Activated B cell treated with CpG ODN at 0.5 μM for 24 hours (primary cell): ENCODE measurements at regions of chr13 and their contacts with region 1.

Region 1: DNA sequence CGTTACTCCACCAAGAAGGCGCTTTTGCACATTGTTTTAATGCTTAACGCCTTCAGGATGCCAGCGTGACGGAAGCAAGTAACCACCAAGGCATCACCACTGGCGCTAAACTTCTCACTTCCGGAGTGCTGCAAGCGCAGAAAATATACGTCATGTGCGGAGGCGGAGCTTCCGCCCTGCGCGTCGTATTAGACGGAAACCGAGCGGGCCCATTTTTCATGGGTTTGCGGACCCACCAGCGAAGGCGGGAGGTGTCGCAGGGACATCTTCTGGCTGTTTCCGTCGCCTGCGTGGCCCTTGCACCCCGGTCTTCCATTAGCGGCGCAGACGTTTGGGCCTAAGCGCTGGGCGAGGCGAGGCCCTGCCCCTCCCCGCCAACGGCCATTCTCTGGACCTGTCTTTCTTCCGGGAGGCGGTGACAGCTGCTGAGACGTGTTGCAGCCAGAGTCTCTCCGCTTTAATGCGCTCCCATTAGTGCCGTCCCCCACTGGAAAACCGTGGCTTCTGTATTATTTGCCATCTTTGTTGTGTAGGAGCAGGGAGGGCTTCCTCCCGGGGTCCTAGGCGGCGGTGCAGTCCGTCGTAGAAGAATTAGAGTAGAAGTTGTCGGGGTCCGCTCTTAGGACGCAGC is at the start of gene ERCC5:
- DNase-seq: peak; percentile 96
- ATAC-seq: peak; percentile 72
- H3K4me3 Mint-ChIP-seq: peak within 1 kb of the TSS; percentile 97
- H3K27ac Mint-ChIP-seq: peak within 1 kb of the TSS; percentile 99
- H3K4me1 Mint-ChIP-seq: peaks cover 31% of the 10 kb centered on the region
- H3K27me3 Mint-ChIP-seq: peaks cover 2% of the 10 kb centered on the region
- CTCF ChIP-seq: no peak
- total RNA-seq, gene ERCC5: 62.8 and 74.3 TPM in 2 replicates

Region 2: DNA sequence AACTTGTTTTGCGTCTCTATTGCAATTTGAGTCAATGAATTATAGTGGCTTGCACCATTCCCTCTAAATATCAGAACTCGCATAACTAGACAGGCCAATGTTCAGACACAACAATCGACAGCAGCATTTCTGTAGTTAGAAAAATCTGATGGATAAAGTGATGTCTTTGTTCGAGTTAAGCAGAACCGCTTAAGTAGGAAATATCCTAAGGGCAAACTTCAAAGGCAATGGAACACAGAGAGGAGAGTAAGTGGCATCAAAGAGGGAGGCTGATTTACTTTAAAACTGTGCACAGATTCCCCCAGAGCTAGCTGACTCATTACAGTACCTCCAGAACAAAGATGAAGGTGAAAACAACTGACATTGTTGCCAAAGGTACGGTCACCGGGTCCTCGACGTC is 1763.3 kb before region 1 on chr13:
- CTCF ChIA-PET with region 1: no interaction called
- POLR2A ChIA-PET with region 1: no interaction called
- intact Hi-C with region 1: no loop called
- DNase-seq: no peak
- ATAC-seq: no peak
- H3K4me3 Mint-ChIP-seq: no peak overlapping the region
- H3K27ac Mint-ChIP-seq: no peak overlapping the region
- H3K4me1 Mint-ChIP-seq: no peaks in the 10 kb centered on the region
- H3K27me3 Mint-ChIP-seq: no peaks in the 10 kb centered on the region
- CTCF ChIP-seq: no peak

Region 3: GRCh38 chr13:102141625-102142472 is 703.9 kb before region 1 on chr13:
- CTCF ChIA-PET with region 1: no interaction called
- POLR2A ChIA-PET with region 1: no interaction called
- intact Hi-C with region 1: loop called (anchors 2 kb)
- DNase-seq: no peak
- ATAC-seq: no peak
- H3K4me3 Mint-ChIP-seq: no peak overlapping the region
- H3K27ac Mint-ChIP-seq: no peak overlapping the region
- H3K4me1 Mint-ChIP-seq: no peaks in the 10 kb centered on the region
- H3K27me3 Mint-ChIP-seq: no peaks in the 10 kb centered on the region
- CTCF ChIP-seq: no peak

Region 4: GRCh38 chr13:102495663-102496062 is 350.1 kb before region 1 on chr13:
- CTCF ChIA-PET with region 1: no interaction called
- POLR2A ChIA-PET with region 1: no interaction called
- intact Hi-C with region 1: no loop called
- DNase-seq: no peak
- ATAC-seq: no peak
- H3K4me3 Mint-ChIP-seq: no peak overlapping the region
- H3K27ac Mint-ChIP-seq: no peak overlapping the region
- H3K4me1 Mint-ChIP-seq: no peaks in the 10 kb centered on the region
- H3K27me3 Mint-ChIP-seq: peaks cover 2% of the 10 kb centered on the region
- CTCF ChIP-seq: no peak

Region 5: DNA sequence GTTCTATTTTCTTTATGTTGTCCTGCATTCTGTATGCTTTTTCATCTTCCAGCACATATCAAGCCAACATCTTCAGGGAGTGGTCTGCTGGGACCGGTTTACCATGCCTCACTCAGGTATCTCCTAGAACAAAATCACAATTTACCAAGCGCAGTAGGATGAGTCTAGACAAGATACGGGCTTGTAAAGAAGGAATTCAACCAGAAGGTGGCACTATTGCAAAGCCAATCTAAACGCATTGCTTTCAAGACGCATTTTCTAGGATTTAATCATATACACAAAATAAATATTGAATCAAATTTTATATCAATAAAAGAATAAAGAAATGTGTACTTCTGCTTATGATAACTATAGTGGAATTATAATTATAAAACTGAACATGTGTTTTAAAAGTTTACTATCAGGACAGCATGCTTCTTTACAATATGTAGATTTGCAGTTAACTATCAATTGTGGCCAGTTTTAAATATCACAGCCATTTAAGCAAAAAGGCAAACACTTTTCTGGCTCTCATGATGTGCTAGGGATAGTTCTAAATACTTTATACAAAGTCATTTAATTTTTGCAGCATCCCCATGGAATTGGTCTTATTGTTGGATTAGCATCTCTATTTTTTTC is 265.1 kb before region 1 on chr13:
- CTCF ChIA-PET with region 1: interaction called, 9 read pairs
- POLR2A ChIA-PET with region 1: interaction called, 11 read pairs
- intact Hi-C with region 1: loop called (anchors 1 kb)
- DNase-seq: no peak
- ATAC-seq: peak; percentile 66
- H3K4me3 Mint-ChIP-seq: no peak overlapping the region
- H3K27ac Mint-ChIP-seq: no peak overlapping the region
- H3K4me1 Mint-ChIP-seq: peaks cover 9% of the 10 kb centered on the region
- H3K27me3 Mint-ChIP-seq: peaks cover 7% of the 10 kb centered on the region
- CTCF ChIP-seq: peak; percentile 43

Region 6: DNA sequence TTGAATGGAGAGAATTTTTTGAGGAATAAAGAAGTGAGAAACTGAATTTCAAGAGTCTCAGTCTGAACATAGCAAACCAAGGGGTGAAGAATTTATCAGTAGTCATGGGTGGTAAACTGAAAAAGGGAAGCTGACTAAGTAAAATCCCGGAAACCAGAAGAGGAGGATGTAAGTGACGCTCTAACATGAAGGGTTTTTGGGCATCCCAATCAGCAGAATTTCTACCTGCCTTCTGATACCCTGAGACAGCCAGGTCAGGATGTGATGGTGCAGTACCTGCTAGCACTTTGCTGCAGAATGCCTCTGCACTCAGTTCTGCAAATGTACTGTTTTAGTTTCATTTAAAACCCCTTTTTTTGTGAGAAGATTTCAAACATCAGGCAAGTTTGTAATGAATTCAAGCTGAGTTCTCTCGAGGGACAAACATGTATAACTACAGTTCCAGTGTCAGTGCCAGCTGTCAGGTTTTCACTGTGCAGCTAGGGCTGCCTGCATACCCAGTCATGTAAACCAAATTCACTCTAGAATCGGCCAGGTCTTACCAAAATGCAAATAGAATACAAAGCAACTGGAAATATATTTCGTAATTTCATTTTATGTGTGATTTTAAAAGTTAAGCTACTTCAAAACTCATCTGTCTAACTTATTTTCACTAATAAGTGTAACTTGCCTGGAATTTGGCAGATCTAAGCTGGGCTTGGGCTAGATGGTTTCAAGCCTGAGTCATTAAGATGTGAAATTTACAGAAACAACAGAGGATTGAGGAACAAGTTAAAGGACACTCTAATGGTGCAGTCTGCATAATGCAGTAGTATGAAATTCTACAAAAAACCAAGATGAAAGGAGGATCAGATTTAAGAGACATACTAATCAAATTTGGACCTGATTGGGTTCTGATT is 164.7 kb before region 1 on chr13:
- CTCF ChIA-PET with region 1: no interaction called
- POLR2A ChIA-PET with region 1: interaction called, 3 read pairs
- intact Hi-C with region 1: loop called (anchors 5 kb)
- DNase-seq: no peak
- ATAC-seq: peak; percentile 69
- H3K4me3 Mint-ChIP-seq: no peak overlapping the region
- H3K27ac Mint-ChIP-seq: peak overlapping the region; percentile 62
- H3K4me1 Mint-ChIP-seq: peaks cover 21% of the 10 kb centered on the region
- H3K27me3 Mint-ChIP-seq: no peaks in the 10 kb centered on the region
- CTCF ChIP-seq: no peak

Region 7: DNA sequence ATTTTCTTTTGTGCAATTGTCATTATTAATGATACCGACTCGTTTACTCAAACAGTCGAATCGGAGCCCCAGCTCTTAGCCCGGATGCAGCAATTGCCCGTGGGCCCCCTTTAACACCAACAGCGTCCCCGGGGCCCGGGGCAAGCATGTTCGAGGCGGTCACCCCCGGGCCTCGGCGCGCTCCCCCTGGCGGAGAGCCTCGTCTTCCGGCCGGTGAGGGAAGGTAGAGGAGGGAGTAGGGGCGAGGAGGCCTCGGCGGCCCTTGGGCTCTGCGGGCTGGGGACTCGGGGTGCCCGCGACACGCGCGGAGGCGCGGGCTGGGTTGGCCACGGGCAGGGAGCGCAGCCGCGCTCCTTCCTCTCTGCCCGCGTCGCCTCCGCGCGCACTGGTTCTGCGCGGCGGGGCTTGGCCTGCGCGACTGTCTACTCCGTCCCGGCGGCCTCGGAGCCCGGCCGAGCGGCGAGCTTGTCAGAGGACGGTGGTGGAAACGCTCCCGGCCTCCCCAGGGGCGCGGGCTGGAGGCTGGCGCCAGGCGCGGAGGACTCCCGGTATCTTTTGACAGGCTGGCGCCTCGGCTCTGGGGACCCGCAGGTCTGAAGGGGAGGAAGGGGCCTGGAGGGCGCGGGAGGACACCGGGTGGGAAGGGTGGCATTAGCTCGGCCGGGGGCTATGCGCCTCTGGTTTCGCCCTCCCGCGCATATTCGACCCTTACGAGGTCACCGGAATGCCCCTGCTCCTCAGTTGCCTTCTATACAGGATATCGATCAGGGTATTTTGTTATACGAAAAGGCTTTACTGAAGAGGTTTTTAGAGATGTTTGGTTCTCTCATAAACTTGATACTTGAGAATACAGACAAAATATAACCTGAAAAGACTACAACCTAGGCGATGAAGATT is 45.4 kb before region 1 on chr13:
- CTCF ChIA-PET with region 1: interaction called, 5 read pairs
- POLR2A ChIA-PET with region 1: interaction called, 13 read pairs
- intact Hi-C with region 1: loop called (anchors 1 kb)
- DNase-seq: peak; percentile 79
- ATAC-seq: peak; percentile 89
- H3K4me3 Mint-ChIP-seq: peak overlapping the region; percentile 85
- H3K27ac Mint-ChIP-seq: no peak overlapping the region
- H3K4me1 Mint-ChIP-seq: peaks cover 18% of the 10 kb centered on the region
- H3K27me3 Mint-ChIP-seq: peaks cover 7% of the 10 kb centered on the region
- CTCF ChIP-seq: no peak

Region 8: DNA sequence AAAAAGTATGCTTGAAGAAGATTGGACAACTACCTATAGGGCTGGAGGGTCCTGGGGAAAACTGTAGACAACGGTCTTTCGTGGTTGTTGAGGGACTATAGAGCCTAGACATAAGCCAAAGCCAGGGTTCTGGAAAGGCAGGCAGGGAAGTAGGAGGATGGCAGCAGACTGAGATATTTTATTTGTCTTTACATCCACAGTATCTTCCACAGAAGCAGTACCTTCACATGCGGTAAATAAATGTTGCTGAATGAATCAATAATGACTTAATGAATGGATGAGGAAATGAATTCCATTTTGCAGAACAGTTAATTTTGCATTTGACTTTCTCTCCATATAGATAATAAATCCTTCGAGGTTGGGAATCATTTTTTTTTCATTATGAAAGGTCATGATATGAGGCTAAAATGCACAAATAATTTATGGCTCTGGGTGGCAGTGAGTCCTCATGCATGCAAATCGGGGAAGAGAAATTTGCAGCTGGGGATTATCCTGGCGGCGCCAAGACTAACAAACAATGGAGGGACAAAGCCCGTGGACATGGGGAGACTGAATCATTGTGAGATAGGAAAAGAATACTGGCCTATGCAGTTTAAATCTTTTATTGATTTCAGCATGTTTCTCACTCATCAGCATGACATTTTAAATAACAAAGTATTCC is 102.1 kb after region 1 on chr13:
- CTCF ChIA-PET with region 1: no interaction called
- POLR2A ChIA-PET with region 1: no interaction called
- intact Hi-C with region 1: no loop called
- DNase-seq: no peak
- ATAC-seq: no peak
- H3K4me3 Mint-ChIP-seq: no peak overlapping the region
- H3K27ac Mint-ChIP-seq: no peak overlapping the region
- H3K4me1 Mint-ChIP-seq: no peaks in the 10 kb centered on the region
- H3K27me3 Mint-ChIP-seq: no peaks in the 10 kb centered on the region
- CTCF ChIP-seq: no peak